Heart right ventricle (tissue), 16 donors: ENCODE measurements at regions of chr16 and their contacts with region 1.

Region 1: DNA sequence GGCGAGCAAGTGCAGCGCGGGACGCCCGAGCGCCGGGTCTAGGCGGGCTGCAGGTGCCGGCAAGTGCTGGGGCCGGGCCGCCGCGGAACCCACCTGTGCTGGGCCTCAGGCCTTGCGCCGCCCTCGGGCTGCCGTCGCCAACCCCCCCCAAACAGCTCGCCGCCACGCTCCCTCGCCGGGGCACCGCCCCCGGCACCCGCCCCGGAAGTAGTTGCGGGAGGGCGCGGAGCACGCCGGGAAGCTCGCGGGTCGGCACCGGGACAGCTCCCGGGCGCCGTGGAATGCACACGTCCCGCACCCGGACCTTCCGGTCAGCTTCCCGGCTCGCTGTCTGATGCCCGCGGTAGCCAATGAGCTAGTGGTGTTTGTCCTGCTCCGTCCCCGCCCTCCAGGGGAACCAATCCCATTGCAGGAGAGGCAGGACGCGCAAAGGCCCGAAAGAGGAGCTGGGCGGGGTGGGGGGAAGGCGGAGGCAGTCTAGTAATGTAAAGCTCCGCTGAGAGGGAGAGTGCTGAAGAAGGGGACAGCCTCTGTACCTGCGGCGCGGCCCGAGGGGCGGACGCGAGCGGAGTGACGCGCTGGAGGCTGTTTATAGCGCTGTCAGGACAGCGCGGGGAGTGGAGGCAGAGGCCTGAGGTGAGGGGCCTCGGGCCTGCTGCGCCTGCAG is at the starts of genes ANKS3 and DNAAF8:
- DNase-seq: peak; percentile 95 to 96
- ATAC-seq: peak; percentile 96 to 98 (median 98)
- H3K4me3 ChIP-seq: peak within 1 kb of the TSS; percentile 77 to 99 (median 93)
- H3K27ac ChIP-seq: peak within 1 kb of the TSS in 9 of 10 donors; percentile 66 to 85 (median 80)
- H3K4me1 ChIP-seq: peaks cover 2 to 20% (median 15%) of the 10 kb centered on the region in 9 donors
- H3K27me3 ChIP-seq: no peaks in the 10 kb centered on the region
- CTCF ChIP-seq: no peak
- total RNA-seq, gene ANKS3: 5.1 to 11.4 (median 7.9) TPM
- total RNA-seq, gene DNAAF8: 0.32 to 1.9 (median 1.1) TPM in 8 of 10 donors, not detected in the others

Region 2: DNA sequence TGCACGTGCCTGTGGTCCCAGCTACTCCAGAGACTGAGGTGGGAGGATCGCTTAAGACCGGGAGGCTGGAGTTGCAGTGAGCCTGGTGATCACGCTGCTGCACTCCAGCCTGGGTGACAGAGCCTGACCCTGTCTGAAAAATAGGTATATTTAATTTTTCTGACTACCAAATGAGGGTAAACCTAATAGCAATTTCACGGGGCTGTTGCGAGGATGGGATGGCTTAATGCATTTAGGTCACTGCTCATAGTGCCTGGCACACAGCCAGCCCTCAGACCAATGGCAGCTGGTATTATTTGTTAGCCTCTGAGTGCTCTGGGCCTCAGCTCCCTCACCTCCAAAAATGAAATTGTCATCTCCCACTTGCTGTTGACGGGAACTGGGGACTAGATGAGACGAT is 189.7 kb before region 1 on chr16:
- intact Hi-C with region 1: no loop called
- DNase-seq: no peak
- ATAC-seq: no peak
- H3K4me3 ChIP-seq: no peak overlapping the region
- H3K27ac ChIP-seq: no peak overlapping the region
- H3K4me1 ChIP-seq: peaks cover 0 to 5% (median 0%) of the 10 kb centered on the region in 9 donors
- H3K27me3 ChIP-seq: no peaks in the 10 kb centered on the region
- CTCF ChIP-seq: no peak

Region 3: DNA sequence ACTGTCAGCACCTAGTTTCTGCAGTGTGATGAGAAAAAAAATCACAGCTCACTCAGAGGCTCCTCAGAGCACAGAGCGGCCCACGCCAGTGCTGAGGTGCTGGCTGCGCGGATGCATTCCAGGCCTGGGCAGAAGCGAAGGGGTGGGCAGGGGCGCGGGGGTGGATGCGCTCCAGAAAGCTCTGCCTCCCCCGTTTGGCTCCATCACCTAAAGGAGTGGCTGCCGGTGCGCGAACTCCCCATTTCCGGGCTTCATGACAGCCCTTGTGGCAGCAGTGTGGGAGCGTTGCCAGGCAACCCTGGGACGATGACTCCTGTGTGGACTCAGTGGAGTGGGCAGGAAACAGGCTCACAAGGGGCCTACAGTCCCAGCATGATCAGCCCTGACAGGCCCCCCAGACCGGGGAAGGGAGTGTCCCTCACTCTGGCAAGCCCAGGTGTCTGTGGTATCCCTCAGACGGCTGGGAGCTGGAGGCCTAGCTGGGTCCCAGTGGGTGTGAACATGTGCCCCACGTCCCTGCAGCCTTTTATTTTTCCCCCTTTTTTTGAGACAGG is 73.7 kb before region 1 on chr16:
- intact Hi-C with region 1: no loop called
- DNase-seq: peak; percentile 55 to 69
- ATAC-seq: peak; percentile 35 to 67 (median 42)
- H3K4me3 ChIP-seq: no peak overlapping the region
- H3K27ac ChIP-seq: peak overlapping the region in 3 of 10 donors; percentile 13 to 68 (median 51)
- H3K4me1 ChIP-seq: peaks cover 6 to 52% (median 24%) of the 10 kb centered on the region in 9 donors
- H3K27me3 ChIP-seq: no peaks in the 10 kb centered on the region
- CTCF ChIP-seq: no peak

Region 4: GRCh38 chr16:4766874-4767628 is 32.9 kb after region 1 on chr16 and contains the start of gene ZNF500:
- intact Hi-C with region 1: loop called in 1 of 10 experiments (anchors 5 kb)
- DNase-seq: peak; percentile 99
- ATAC-seq: peak; percentile 94 to 97 (median 96)
- H3K4me3 ChIP-seq: peak within 1 kb of the TSS; percentile 79 to 99 (median 86)
- H3K27ac ChIP-seq: peak within 1 kb of the TSS; percentile 51 to 93 (median 88)
- H3K4me1 ChIP-seq: peaks cover 12 to 44% (median 32%) of the 10 kb centered on the region in 9 donors
- H3K27me3 ChIP-seq: no peaks in the 10 kb centered on the region
- CTCF ChIP-seq: peak in 2 of 9 donors; percentile 6 to 12
- total RNA-seq, gene ZNF500: 4.3 to 9.9 (median 8.1) TPM

Region 5: GRCh38 chr16:4795181-4795828 is 61.1 kb after region 1 on chr16 and contains the start of gene SMIM22:
- intact Hi-C with region 1: loop called in 1 of 10 experiments (anchors 5 kb)
- DNase-seq: no peak
- ATAC-seq: peak in 2 of 8 donors; percentile 9 to 13
- H3K4me3 ChIP-seq: no peak within 1 kb of the TSS
- H3K27ac ChIP-seq: no peak within 1 kb of the TSS
- H3K4me1 ChIP-seq: peaks cover 0 to 5% (median 3%) of the 10 kb centered on the region in 9 donors
- H3K27me3 ChIP-seq: no peaks in the 10 kb centered on the region
- CTCF ChIP-seq: no peak
- total RNA-seq, gene SMIM22: not detected